ENCODE measurements at regions of chr11 and their contacts with region 1.

Region 1: GRCh38 chr11:27698872-27699474 is 1.3 kb downstream of the BDNF start:
- DNase-seq: peak; percentile 76
- ATAC-seq: peak; percentile 91 to 94

Region 2: GRCh38 chr11:27028561-27028965 is 670.4 kb before region 1 on chr11:
- intact Hi-C with region 1: no loop called
- DNase-seq: no peak
- ATAC-seq: peak in 1 of 2 donors; percentile 74

Region 3: GRCh38 chr11:27088353-27088752 is 610.6 kb before region 1 on chr11:
- intact Hi-C with region 1: no loop called
- DNase-seq: no peak
- ATAC-seq: no peak

Region 4: GRCh38 chr11:28529540-28530410 is 830.8 kb after region 1 on chr11:
- intact Hi-C with region 1: loop called (anchors 5 to 10 kb)
- DNase-seq: no peak
- ATAC-seq: no peak

Region 5: GRCh38 chr11:28697920-28698827 is 999.2 kb after region 1 on chr11:
- intact Hi-C with region 1: loop called in 1 of 2 experiments (anchors 5 kb)
- DNase-seq: peak; percentile 51
- ATAC-seq: peak in 1 of 2 donors; percentile 38

Region 6: GRCh38 chr11:29333993-29334775 is 1635.2 kb after region 1 on chr11:
- intact Hi-C with region 1: loop called in 1 of 2 experiments (anchors 2 kb)
- DNase-seq: no peak
- ATAC-seq: peak in 1 of 2 donors; percentile 37